ENCODE measurements at regions of chr5 and their contacts with region 1.

Region 1: GRCh38 chr5:32027717-32028321 is 146.3 kb downstream of the GOLPH3 start:
- DNase-seq: peak; percentile 81 to 83
- ATAC-seq: peak; percentile 97 to 98
- H3K4me3 ChIP-seq: peak overlapping the region in 3 of 4 donors; percentile 2 to 16 (median 3)
- H3K27ac ChIP-seq: peak overlapping the region; percentile 60 to 73 (median 67)
- H3K4me1 ChIP-seq: peaks cover 25 to 62% of the 10 kb centered on the region in 2 donors
- H3K27me3 ChIP-seq: no peaks in the 10 kb centered on the region
- CTCF ChIP-seq: no peak
- POLR2A ChIP-seq: no peak

Region 2: GRCh38 chr5:32042470-32042981 is 14.7 kb after region 1 on chr5:
- in situ Hi-C with region 1: no loop called
- intact Hi-C with region 1: loop called (anchors 2 kb)
- DNase-seq: no peak
- ATAC-seq: peak in 1 of 2 donors; percentile 42
- H3K4me3 ChIP-seq: no peak overlapping the region
- H3K27ac ChIP-seq: no peak overlapping the region
- H3K4me1 ChIP-seq: no peaks in the 10 kb centered on the region
- H3K27me3 ChIP-seq: no peaks in the 10 kb centered on the region
- CTCF ChIP-seq: no peak
- POLR2A ChIP-seq: no peak